Activated T-helper 2 cell treated with anti-CD3 and anti-CD28 coated beads, Interferon-gamma antibody, Interleukin-2, Interleukin-4, amounts not matched to agents 10 μg/mL and 5 μg/mL and 100 μg/mL, durations not matched to agents 14 hours and 24 hours and 36 hours (primary cell): ENCODE measurements at regions of chr11 and their contacts with region 1.

Region 1: GRCh38 chr11:133834682-133835592 is 10.4 kb downstream of the SPATA19 start:
- DNase-seq: peak; percentile 52
- H3K4me3 Mint-ChIP-seq: no peak overlapping the region
- H3K27ac Mint-ChIP-seq: no peak overlapping the region
- H3K4me1 Mint-ChIP-seq: peaks cover 4% of the 10 kb centered on the region
- H3K27me3 Mint-ChIP-seq: no peaks in the 10 kb centered on the region

Region 2: DNA sequence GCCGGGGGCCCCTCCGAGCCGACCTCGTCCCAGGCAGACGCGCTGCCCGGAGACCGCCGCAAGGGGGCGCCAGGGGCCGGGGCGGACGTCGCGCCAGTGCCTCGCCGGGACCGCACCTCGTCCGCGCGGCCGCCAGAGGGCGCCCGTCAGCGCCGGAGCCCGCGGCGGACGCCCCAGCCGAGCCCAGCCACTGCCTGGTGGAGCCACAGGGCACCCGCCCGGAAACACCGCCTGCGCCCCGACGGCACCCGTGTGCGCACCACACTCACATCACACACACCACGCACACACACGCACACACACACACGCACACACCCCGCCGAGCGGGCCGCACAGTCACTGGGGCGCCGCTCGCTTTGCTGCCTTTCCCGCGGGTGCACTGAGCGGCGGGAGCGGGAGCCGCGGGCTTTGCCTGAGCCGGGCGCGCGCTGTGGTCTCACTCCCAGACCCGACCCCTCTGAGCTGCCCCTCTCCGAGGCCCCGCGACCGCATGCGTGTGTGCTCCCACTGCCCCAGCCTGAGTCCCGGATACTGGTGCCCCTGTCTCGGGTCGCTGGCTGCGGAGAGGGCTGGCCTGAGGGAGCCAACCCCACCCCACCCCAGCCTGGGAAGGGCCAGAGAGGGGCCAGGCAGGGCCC is 752.0 kb before region 1 on chr11:
- intact Hi-C with region 1: loop called (anchors 2 kb)
- DNase-seq: peak; percentile 69
- H3K4me3 Mint-ChIP-seq: no peak overlapping the region
- H3K27ac Mint-ChIP-seq: no peak overlapping the region
- H3K4me1 Mint-ChIP-seq: no peaks in the 10 kb centered on the region
- H3K27me3 Mint-ChIP-seq: peaks cover 17% of the 10 kb centered on the region

Region 3: GRCh38 chr11:133134314-133135173 is 700.4 kb before region 1 on chr11:
- intact Hi-C with region 1: loop called (anchors 1 kb)
- DNase-seq: peak; percentile 22
- H3K4me3 Mint-ChIP-seq: no peak overlapping the region
- H3K27ac Mint-ChIP-seq: no peak overlapping the region
- H3K4me1 Mint-ChIP-seq: no peaks in the 10 kb centered on the region
- H3K27me3 Mint-ChIP-seq: peaks cover 3% of the 10 kb centered on the region